Naive thymus-derived CD4-positive, alpha-beta T cell (primary cell): ENCODE measurements at regions of chrX and their contacts with region 1.

Region 1: DNA sequence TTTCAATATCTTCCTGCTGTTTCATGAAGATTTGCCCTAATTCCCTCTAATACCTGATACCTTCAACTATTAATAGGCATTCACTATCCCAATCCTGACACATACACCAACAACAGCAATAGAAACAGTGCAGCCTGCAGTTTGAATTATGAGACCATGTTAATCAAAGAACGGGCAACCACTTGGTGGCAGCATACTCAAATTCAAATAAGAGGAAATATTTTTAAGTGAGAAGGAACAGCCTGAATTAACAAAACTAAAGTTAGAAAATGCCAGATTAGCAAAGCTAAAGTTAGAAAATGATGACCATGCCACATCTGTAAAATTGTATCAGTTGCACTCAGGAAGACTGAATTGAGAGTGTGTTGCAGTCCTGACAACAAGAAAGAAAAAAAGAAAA is 204.9 kb downstream of the SMARCA1 start:
- DNase-seq: no peak
- ATAC-seq: no peak
- H3K4me3 ChIP-seq: no peak overlapping the region
- H3K4me3 Mint-ChIP-seq: no peak overlapping the region
- H3K27ac ChIP-seq: no peak overlapping the region
- H3K27ac Mint-ChIP-seq: no peak overlapping the region
- H3K4me1 ChIP-seq: no peaks in the 10 kb centered on the region
- H3K4me1 Mint-ChIP-seq: peaks cover 0 to 1% (median 0%) of the 10 kb centered on the region in 7 donors
- H3K27me3 ChIP-seq: no peaks in the 10 kb centered on the region
- H3K27me3 Mint-ChIP-seq: no peaks in the 10 kb centered on the region

Region 2: GRCh38 chrX:128759745-128760144 is 558.6 kb before region 1 on chrX:
- CTCF ChIA-PET with region 1: no interaction called
- POLR2A ChIA-PET with region 1: no interaction called
- intact Hi-C with region 1: no loop called
- DNase-seq: no peak
- ATAC-seq: no peak
- H3K4me3 ChIP-seq: no peak overlapping the region
- H3K4me3 Mint-ChIP-seq: no peak overlapping the region
- H3K27ac ChIP-seq: no peak overlapping the region
- H3K27ac Mint-ChIP-seq: no peak overlapping the region
- H3K4me1 ChIP-seq: no peaks in the 10 kb centered on the region
- H3K4me1 Mint-ChIP-seq: peaks cover 0 to 1% (median 0%) of the 10 kb centered on the region in 7 donors
- H3K27me3 ChIP-seq: no peaks in the 10 kb centered on the region
- H3K27me3 Mint-ChIP-seq: peaks cover 0 to 5% (median 0%) of the 10 kb centered on the region in 5 donors

Region 3: GRCh38 chrX:129360175-129360574 is 41.8 kb after region 1 on chrX:
- CTCF ChIA-PET with region 1: interaction called, 3 read pairs
- POLR2A ChIA-PET with region 1: no interaction called
- intact Hi-C with region 1: loop called in 1 of 2 experiments (anchors 2 kb)
- DNase-seq: peak in 7 of 9 donors; percentile 8 to 45 (median 28)
- ATAC-seq: peak; percentile 48
- H3K4me3 ChIP-seq: no peak overlapping the region
- H3K4me3 Mint-ChIP-seq: no peak overlapping the region
- H3K27ac ChIP-seq: no peak overlapping the region
- H3K27ac Mint-ChIP-seq: peak overlapping the region in 1 of 9 donors; percentile 29
- H3K4me1 ChIP-seq: no peaks in the 10 kb centered on the region
- H3K4me1 Mint-ChIP-seq: no peaks in the 10 kb centered on the region
- H3K27me3 ChIP-seq: no peaks in the 10 kb centered on the region
- H3K27me3 Mint-ChIP-seq: no peaks in the 10 kb centered on the region